ENCODE measurements at regions of chr1 and their contacts with region 1.

Region 1: GRCh38 chr1:46940307-46940706 is 969 bp downstream of the CYP4A11 start:
- DNase-seq: no peak
- H3K4me3 ChIP-seq: no peak overlapping the region
- H3K27ac ChIP-seq: no peak overlapping the region
- H3K4me1 ChIP-seq: no peaks in the 10 kb centered on the region
- H3K27me3 ChIP-seq: peaks cover 0 to 5% (median 0%) of the 10 kb centered on the region in 4 donors
- CTCF ChIP-seq: no peak
- POLR2A ChIP-seq: no peak

Region 2: DNA sequence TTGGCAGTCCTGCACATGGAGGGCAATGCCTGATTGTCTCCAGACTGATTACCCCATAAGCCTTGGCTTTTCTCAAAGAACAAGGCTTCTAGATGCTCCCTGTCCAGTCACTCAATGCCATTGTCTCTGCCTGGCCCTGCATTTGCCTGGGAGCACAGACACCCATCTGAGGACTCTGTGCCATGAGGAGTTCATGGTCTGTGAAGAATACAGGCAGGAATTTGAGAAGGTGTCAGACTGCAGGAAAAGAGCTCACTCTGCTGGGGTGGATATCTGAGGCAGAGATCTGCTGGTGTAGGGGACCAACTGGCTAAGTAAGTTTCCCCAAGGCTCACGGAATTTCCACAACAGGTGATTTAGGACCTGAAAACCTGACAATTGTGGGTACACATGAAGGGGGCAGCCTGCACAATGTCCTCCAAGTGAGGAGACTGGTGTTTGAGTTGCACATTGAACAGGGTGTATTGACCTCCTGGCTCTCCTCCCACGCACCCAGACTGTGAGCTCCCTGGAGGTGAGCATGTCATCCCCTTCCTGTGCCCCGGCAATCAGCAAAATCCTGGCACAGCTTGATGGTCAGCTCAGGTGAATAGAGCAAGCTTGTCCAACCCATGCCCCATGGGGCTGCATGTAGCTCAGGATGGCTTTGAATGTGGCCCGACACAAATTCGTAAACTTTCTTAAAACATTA is 197.8 kb after region 1 on chr1:
- intact Hi-C with region 1: loop called (anchors 5 kb)
- DNase-seq: no peak
- H3K4me3 ChIP-seq: no peak overlapping the region
- H3K27ac ChIP-seq: no peak overlapping the region
- H3K4me1 ChIP-seq: no peaks in the 10 kb centered on the region
- H3K27me3 ChIP-seq: peaks cover 0 to 7% (median 0%) of the 10 kb centered on the region in 4 donors
- CTCF ChIP-seq: no peak
- POLR2A ChIP-seq: no peak

Measured in esophagus squamous epithelium (tissue), 5 donors.